ENCODE measurements at regions of chr16 and their contacts with region 1.

Region 1: GRCh38 chr16:69330286-69331109 is at the start of gene PDF:
- DNase-seq: peak; percentile 92
- ATAC-seq: peak; percentile 94
- H3K4me3 Mint-ChIP-seq: peak within 1 kb of the TSS; percentile 87
- H3K27ac Mint-ChIP-seq: peak within 1 kb of the TSS; percentile 80
- H3K4me1 Mint-ChIP-seq: peaks cover 30% of the 10 kb centered on the region
- H3K27me3 Mint-ChIP-seq: no peaks in the 10 kb centered on the region
- total RNA-seq, gene PDF: 12.6 to 14.5 TPM

Region 2: GRCh38 chr16:69243479-69243878 is 87.0 kb before region 1 on chr16:
- POLR2A ChIA-PET with region 1: no interaction called
- DNase-seq: no peak
- ATAC-seq: no peak
- H3K4me3 Mint-ChIP-seq: no peak overlapping the region
- H3K27ac Mint-ChIP-seq: no peak overlapping the region
- H3K4me1 Mint-ChIP-seq: peaks cover 3% of the 10 kb centered on the region
- H3K27me3 Mint-ChIP-seq: no peaks in the 10 kb centered on the region

Region 3: DNA sequence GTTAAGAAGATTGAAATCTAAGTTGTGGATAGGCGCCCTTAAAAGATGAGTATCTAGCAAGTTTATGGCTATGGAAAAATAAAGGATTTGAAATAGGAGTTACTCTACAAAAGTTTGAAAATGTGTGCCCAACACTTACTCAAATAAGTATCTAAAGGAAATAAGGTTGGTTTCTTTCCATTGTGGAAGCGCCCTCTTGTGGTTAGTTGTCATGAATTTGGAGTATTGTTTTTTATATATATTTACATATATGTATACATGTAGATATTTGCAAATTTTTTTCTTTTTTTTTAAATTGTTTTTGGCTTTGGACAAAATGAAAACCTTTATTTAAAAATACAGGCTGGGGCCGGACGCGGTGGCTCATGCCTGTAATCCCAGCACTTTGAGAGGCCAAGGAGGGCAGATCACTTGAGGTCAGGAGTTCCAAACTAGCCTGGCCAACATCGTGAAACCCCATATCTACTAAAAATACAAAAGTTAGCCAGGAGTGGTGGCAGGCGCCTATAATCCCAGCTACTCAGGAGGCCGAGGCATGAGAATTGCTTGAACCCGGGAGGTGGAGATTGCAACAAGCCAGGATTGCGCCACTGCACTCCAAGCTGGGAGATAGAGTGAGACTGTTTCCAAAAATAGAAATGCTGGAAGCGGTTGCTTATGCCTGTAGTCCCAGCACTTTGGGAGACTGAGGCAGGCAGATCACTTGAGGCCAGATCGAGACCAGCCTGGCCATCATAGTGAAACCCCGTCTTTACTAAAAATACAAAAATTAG is 43.4 kb before region 1 on chr16:
- POLR2A ChIA-PET with region 1: no interaction called
- DNase-seq: no peak
- ATAC-seq: no peak
- H3K4me3 Mint-ChIP-seq: no peak overlapping the region
- H3K27ac Mint-ChIP-seq: no peak overlapping the region
- H3K4me1 Mint-ChIP-seq: peaks cover 2% of the 10 kb centered on the region
- H3K27me3 Mint-ChIP-seq: no peaks in the 10 kb centered on the region

Region 4: GRCh38 chr16:69298261-69298660 is 32.2 kb before region 1 on chr16:
- POLR2A ChIA-PET with region 1: no interaction called
- DNase-seq: no peak
- ATAC-seq: no peak
- H3K4me3 Mint-ChIP-seq: no peak overlapping the region
- H3K27ac Mint-ChIP-seq: no peak overlapping the region
- H3K4me1 Mint-ChIP-seq: no peaks in the 10 kb centered on the region
- H3K27me3 Mint-ChIP-seq: no peaks in the 10 kb centered on the region

Region 5: GRCh38 chr16:69310653-69311532 is 19.6 kb before region 1 on chr16 and contains the start of gene VPS4A:
- POLR2A ChIA-PET with region 1: interaction called, 19 read pairs
- DNase-seq: peak; percentile 100
- ATAC-seq: peak; percentile 97
- H3K4me3 Mint-ChIP-seq: peak within 1 kb of the TSS; percentile 99
- H3K27ac Mint-ChIP-seq: peak within 1 kb of the TSS; percentile 98
- H3K4me1 Mint-ChIP-seq: peaks cover 19% of the 10 kb centered on the region
- H3K27me3 Mint-ChIP-seq: peaks cover 3% of the 10 kb centered on the region
- total RNA-seq, gene VPS4A: 38.6 to 41.8 TPM